Esophagus muscularis mucosa (tissue), 4 donors: ENCODE measurements at regions of chr3 and their contacts with region 1.

Region 1: DNA sequence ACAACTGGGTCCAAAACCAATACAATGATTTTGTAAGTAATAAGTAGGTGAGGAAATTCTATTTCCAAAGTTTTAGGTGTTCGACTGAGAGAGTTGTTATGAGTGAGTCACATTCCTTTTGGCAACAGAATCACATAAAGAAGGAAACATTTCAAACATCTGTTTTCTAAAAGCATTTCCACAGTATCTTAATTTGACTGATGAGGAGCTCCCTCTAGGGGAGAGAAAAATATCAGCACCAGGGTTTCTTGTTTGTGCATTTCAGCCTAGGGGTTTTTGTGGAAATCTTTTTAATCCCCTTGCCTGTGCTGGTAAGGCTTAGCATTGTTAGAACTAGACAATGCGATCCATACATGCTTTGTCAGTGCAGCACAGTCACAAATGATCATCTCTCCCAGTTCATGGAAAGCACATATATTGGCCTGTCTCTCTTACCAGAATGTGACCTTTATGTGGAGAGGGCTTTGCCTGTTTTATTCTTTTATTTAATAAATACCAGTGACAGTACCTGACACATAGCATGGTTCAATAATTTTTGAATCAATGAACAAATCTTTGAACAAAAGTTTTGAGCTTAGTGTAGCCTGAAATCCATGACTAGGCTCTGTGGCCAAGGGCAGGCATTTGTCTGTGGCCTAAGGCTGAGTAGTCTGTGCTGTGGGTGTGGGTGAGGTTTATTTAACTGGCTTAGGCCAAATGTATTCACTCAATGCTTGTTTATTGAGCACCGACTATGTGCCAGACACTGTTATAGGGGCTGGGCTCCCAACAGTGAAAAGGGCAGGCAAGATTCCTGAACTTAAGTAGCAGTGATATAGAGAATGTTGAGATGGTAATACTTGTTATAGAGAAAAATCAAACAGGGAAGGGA is 21.1 kb upstream of the IQCF6 start:
- DNase-seq: peak; percentile 68
- H3K4me3 ChIP-seq: no peak overlapping the region
- H3K27ac ChIP-seq: no peak overlapping the region
- H3K4me1 ChIP-seq: peaks cover 0 to 3% (median 0%) of the 10 kb centered on the region in 4 donors
- H3K27me3 ChIP-seq: peaks cover 0 to 26% (median 0%) of the 10 kb centered on the region in 4 donors
- CTCF ChIP-seq: peak; percentile 67 to 79 (median 79)
- EP300 ChIP-seq: no peak
- POLR2A ChIP-seq: no peak

Region 2: DNA sequence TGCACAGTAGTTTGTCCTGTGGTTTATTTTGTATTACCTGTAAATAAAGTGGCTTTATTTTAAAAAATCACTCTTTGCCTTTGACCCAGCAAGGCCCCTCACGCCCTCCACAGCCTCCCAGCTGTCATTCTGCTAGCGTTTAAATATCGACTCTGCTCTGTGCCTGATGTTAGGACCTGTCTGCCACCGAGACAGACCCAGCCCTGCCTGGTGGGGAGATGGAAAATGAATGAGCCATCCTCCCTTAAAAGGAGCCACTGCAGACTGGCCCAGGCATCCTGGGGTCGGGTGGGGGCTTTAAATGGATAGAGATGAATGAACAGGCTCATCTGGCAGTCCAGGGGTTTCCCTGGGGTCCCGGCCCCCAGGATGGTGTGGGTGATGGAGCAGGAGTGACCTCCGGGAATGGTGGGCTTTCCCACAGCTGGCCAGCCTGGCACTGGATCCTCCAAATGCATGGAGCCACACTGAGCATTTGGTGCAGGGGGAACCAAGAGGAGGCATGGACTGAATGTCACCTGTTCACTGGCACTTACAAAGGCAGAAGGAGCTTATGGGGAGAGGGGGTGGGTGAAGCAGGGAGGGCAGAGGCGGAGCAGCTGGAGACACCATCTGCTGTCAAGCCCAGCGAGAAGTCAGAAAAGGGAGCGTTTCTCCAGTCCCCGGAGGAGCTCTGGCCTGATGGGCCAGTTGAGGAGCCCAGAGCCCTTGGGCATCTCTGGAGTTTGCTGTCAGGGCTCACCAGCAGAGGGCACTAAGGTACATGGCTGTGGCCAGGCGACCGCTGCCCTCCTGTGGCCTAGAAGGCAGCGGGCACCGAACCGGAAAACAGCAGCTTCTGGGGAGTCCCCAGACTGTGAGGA is 81.3 kb before region 1 on chr3:
- intact Hi-C with region 1: loop called (anchors 10 kb)
- DNase-seq: peak; percentile 50
- H3K4me3 ChIP-seq: no peak overlapping the region
- H3K27ac ChIP-seq: no peak overlapping the region
- H3K4me1 ChIP-seq: no peaks in the 10 kb centered on the region
- H3K27me3 ChIP-seq: peaks cover 0 to 29% (median 0%) of the 10 kb centered on the region in 4 donors
- CTCF ChIP-seq: peak; percentile 49 to 55 (median 52)
- EP300 ChIP-seq: no peak
- POLR2A ChIP-seq: no peak